Heart left ventricle (tissue), 16 donors: ENCODE measurements at regions of chr3 and their contacts with region 1.

Region 1: GRCh38 chr3:6301626-6302025 is 559.3 kb upstream of the GRM7 start:
- DNase-seq: no peak
- ATAC-seq: no peak
- H3K4me3 ChIP-seq: no peak overlapping the region
- H3K27ac ChIP-seq: no peak overlapping the region
- H3K4me1 ChIP-seq: no peaks in the 10 kb centered on the region
- H3K27me3 ChIP-seq: no peaks in the 10 kb centered on the region
- CTCF ChIP-seq: no peak
- POLR2A ChIP-seq: no peak

Region 2: DNA sequence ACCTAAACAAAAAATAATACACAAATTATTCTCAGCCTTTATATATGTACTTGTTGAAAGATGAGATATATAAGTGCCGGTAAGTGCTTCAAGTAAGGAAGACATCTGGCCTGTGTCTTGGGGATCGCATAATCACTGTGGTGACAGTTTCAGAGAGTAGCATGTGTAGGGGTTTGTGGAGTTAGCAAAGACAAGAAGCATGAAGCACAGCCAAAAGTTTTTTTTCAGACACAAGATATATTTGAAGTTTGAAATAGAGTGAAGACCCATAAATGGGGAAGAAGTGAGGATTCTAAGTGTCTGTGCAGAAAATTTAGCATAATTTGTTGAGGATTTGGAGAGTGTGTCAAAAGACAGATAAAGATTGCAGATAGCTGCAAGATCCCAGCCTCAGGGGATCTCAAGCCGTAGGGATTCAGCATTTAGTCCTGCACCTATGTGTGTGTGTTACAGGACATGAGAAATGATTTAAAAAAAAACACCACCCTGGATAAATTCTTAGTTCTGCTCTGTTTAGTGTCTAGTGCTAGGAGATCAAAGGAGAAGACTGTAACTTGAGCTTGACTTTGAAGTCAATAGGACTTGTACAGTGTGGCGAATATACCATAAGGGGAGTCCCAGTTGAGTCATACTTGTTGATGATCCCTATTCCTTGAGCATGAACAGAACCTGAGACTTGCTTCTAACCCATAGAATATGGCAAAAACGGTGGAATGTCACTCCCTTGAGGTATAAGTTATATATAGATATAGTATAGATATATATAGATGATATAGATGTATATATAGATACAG is 435.4 kb after region 1 on chr3:
- intact Hi-C with region 1: loop called in 1 of 10 experiments (anchors 5 kb)
- DNase-seq: no peak
- ATAC-seq: no peak
- H3K4me3 ChIP-seq: no peak overlapping the region
- H3K27ac ChIP-seq: no peak overlapping the region
- H3K4me1 ChIP-seq: no peaks in the 10 kb centered on the region
- H3K27me3 ChIP-seq: no peaks in the 10 kb centered on the region
- CTCF ChIP-seq: no peak
- POLR2A ChIP-seq: no peak